Caco-2 (cell line): ENCODE measurements at regions of chr16 and their contacts with region 1.

Region 1: GRCh38 chr16:57447186-57447962 is at the starts of genes CIAPIN1 and COQ9:
- DNase-seq: peak; percentile 96 to 97
- H3K4me3 ChIP-seq: peak within 1 kb of the TSS; percentile 93
- H3K4me3 Mint-ChIP-seq: peak within 1 kb of the TSS; percentile 90
- H3K27ac Mint-ChIP-seq: peak within 1 kb of the TSS; percentile 97
- H3K4me1 ChIP-seq: peaks cover 3% of the 10 kb centered on the region; the same call in 1 of the 2 replicates
- H3K4me1 Mint-ChIP-seq: peaks cover 5% of the 10 kb centered on the region
- H3K27me3 ChIP-seq: no peaks in the 10 kb centered on the region
- H3K27me3 Mint-ChIP-seq: no peaks in the 10 kb centered on the region
- CTCF ChIP-seq: no peak
- total RNA-seq, gene CIAPIN1: 98.3 and 103 TPM in 2 replicates
- total RNA-seq, gene COQ9: 50.9 and 54.2 TPM in 2 replicates

Region 2: DNA sequence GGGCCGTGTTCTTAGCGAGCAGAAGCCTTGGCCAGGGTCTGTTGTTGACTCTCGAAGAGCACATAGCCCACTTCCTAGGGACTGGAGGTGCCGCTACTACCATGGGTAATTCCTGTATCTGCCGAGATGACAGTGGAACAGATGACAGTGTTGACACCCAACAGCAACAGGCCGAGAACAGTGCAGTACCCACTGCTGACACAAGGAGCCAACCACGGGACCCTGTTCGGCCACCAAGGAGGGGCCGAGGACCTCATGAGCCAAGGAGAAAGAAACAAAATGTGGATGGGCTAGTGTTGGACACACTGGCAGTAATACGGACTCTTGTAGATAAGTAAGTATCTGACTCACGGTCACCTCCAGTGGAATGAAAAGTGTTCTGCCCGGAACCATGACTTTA is 242.7 kb before region 1 on chr16:
- CTCF ChIA-PET with region 1: no interaction called
- POLR2A ChIA-PET with region 1: no interaction called
- intact Hi-C with region 1: no loop called
- DNase-seq: peak in 1 of 2 experiments; percentile 17
- H3K4me3 ChIP-seq: no peak overlapping the region
- H3K4me3 Mint-ChIP-seq: no peak overlapping the region
- H3K27ac Mint-ChIP-seq: no peak overlapping the region
- H3K4me1 ChIP-seq: no peaks in the 10 kb centered on the region
- H3K4me1 Mint-ChIP-seq: no peaks in the 10 kb centered on the region
- H3K27me3 ChIP-seq: no peaks in the 10 kb centered on the region
- H3K27me3 Mint-ChIP-seq: no peaks in the 10 kb centered on the region
- CTCF ChIP-seq: no peak

Region 3: DNA sequence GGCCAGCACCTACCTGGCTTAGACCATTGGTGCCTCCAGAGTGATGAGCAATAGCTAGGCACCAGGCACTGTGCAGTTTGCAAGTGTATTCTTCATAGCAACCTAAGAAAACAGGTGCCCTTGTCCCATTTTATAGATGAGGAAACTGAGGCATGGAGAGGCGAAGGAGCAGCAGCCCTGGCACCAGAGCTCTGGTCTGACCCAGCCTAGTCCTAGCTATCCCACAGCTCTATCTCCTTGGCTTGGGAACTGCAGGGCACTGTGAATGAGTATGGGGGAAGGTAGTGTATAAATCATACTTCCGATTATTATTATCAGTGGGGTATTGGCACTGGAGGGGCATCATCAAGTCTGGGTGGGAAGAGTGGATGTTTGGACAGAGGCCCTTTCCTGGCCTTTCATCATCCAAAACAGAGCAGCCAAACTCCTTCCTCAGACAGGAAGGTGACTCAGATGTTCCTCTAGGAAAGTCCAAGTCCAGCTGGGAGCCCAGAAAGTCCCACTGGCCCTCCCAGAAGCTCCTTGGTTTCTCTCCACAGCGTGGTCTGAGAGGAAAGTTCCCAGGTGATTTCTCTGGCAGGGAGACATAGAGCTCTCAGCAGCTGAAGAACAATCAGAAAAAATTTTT is 130.9 kb before region 1 on chr16:
- CTCF ChIA-PET with region 1: no interaction called
- POLR2A ChIA-PET with region 1: interaction called, 10 read pairs
- intact Hi-C with region 1: no loop called
- DNase-seq: peak in 1 of 2 experiments; percentile 20
- H3K4me3 ChIP-seq: no peak overlapping the region
- H3K4me3 Mint-ChIP-seq: no peak overlapping the region
- H3K27ac Mint-ChIP-seq: no peak overlapping the region
- H3K4me1 ChIP-seq: peaks cover 17% of the 10 kb centered on the region
- H3K4me1 Mint-ChIP-seq: peaks cover 6% of the 10 kb centered on the region
- H3K27me3 ChIP-seq: no peaks in the 10 kb centered on the region
- H3K27me3 Mint-ChIP-seq: no peaks in the 10 kb centered on the region
- CTCF ChIP-seq: no peak

Region 4: GRCh38 chr16:57462209-57462977 is 15.0 kb after region 1 on chr16 and contains the start of gene POLR2C:
- CTCF ChIA-PET with region 1: interaction called, 13 read pairs
- POLR2A ChIA-PET with region 1: interaction called, 16 read pairs
- intact Hi-C with region 1: loop called (anchors 1 kb)
- DNase-seq: peak; percentile 88 to 95
- H3K4me3 ChIP-seq: peak within 1 kb of the TSS; percentile 73
- H3K4me3 Mint-ChIP-seq: peak within 1 kb of the TSS; percentile 85
- H3K27ac Mint-ChIP-seq: peak within 1 kb of the TSS; percentile 92
- H3K4me1 ChIP-seq: 0 out of 2 replicates have a peak, but pooled peaks cover 8% of the 10 kb centered on the region
- H3K4me1 Mint-ChIP-seq: no peaks in the 10 kb centered on the region
- H3K27me3 ChIP-seq: no peaks in the 10 kb centered on the region
- H3K27me3 Mint-ChIP-seq: no peaks in the 10 kb centered on the region
- CTCF ChIP-seq: peak; percentile 96 to 98
- total RNA-seq, gene POLR2C: 100 and 102 TPM in 2 replicates

Region 5: DNA sequence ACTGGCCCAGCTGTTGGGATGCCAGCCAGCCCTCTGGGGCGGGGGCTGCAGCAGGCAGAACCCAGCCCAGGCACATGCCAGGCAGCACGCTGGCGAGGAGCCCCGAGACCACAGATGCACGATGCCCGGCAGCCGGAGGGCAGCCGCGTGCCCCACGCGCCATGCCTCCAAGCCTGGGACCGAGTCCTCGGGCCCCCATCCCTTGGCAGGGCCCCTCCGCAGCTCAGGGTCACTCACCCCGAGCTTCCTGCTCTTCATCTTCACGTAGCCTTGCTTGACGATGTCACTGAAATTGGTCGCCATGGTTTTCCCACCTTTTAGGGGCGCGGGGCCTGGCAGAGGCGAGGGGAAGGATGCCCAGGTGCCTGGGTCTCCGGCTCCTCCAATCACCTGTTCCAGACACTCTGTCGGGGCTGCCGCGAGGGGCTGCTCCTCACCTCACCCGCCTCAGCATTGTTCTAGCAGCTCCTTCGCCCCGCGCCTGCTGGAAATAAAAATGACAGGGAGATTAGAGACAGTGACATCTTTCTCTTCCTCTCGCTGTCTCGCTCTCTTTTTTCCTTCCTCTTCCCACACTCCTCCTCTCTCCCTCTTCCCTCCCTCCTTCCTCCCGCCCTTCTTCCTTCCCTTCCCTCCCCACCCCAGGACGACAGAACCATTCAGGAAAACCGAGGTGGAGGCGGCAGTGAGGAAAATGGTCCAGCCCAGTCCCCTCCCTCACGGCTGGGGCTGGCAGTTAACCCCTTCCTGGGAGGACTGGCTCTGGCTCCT is 32.0 kb after region 1 on chr16:
- CTCF ChIA-PET with region 1: interaction called, 7 read pairs
- POLR2A ChIA-PET with region 1: interaction called, 15 read pairs
- intact Hi-C with region 1: no loop called
- DNase-seq: peak; percentile 88 to 89
- H3K4me3 ChIP-seq: peak overlapping the region; percentile 50
- H3K4me3 Mint-ChIP-seq: peak overlapping the region; percentile 89
- H3K27ac Mint-ChIP-seq: peak overlapping the region; percentile 100
- H3K4me1 ChIP-seq: peaks cover 45% of the 10 kb centered on the region
- H3K4me1 Mint-ChIP-seq: peaks cover 39% of the 10 kb centered on the region
- H3K27me3 ChIP-seq: no peaks in the 10 kb centered on the region
- H3K27me3 Mint-ChIP-seq: no peaks in the 10 kb centered on the region
- CTCF ChIP-seq: no peak

Region 6: DNA sequence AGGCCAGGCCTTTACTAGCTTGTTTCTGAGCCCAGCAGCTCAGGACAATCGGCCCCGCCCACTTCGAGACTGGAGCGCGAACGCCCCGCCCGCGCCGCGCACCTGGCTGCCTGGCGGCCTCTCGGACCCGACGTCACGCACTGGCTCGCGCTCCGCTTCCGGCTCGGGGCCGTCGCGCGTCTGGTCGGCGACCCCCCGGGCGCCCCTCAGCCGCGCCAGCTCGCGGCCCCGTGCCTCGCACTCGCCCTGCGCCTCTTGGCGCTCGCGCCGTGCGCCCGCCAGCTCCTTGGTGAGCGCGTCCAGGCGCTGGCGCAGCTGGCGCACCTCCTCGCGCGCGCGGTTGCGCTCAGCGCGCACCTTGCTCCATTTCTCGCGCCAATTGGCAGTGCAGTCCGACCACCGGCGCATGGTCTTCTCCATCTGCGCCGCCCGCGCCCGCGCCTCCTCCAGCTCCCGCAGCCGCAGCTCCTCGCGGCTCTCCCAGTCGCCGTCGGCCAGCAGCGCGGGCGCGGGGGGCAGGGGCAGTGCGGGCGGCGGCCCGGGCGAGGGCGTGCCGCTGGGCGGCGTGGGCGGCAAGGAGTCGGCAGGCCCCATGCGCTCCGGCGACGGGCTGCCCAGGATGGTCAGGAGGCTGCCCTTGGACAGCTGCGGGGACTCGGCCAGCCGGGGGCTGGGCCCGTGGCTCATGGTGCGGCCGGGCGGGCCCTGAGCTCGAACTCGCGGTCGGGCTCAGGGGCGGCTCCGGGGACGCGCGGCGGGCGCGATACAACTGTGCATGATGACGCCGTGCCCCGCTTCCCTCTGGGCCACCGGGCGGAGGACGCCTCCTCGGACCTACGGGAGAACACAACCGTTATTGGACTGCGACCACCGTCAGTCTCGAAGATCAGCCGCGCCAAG is 81.4 kb after region 1 on chr16:
- CTCF ChIA-PET with region 1: interaction called, 3 read pairs
- POLR2A ChIA-PET with region 1: interaction called, 12 read pairs
- intact Hi-C with region 1: no loop called
- DNase-seq: peak; percentile 85 to 91
- H3K4me3 ChIP-seq: peak overlapping the region; percentile 70
- H3K4me3 Mint-ChIP-seq: peak overlapping the region; percentile 71
- H3K27ac Mint-ChIP-seq: peak overlapping the region; percentile 36
- H3K4me1 ChIP-seq: peaks cover 15% of the 10 kb centered on the region
- H3K4me1 Mint-ChIP-seq: peaks cover 23% of the 10 kb centered on the region
- H3K27me3 ChIP-seq: no peaks in the 10 kb centered on the region
- H3K27me3 Mint-ChIP-seq: no peaks in the 10 kb centered on the region
- CTCF ChIP-seq: no peak